CD4-positive, alpha-beta T cell (primary cell): ENCODE measurements at regions of chr1 and their contacts with region 1.

Region 1: GRCh38 chr1:169610108-169610507 is 19.8 kb downstream of the SELP start:
- DNase-seq: no peak
- ATAC-seq: no peak
- H3K4me3 ChIP-seq: no peak overlapping the region
- H3K4me3 Mint-ChIP-seq: no peak overlapping the region
- H3K27ac ChIP-seq: no peak overlapping the region
- H3K27ac Mint-ChIP-seq: no peak overlapping the region
- H3K4me1 ChIP-seq: peaks cover 16% of the 10 kb centered on the region
- H3K4me1 Mint-ChIP-seq: peaks cover 67% of the 10 kb centered on the region
- H3K27me3 ChIP-seq: no peaks in the 10 kb centered on the region
- H3K27me3 Mint-ChIP-seq: no peaks in the 10 kb centered on the region
- CTCF ChIP-seq: no peak

Region 2: GRCh38 chr1:169648709-169649108 is 38.6 kb after region 1 on chr1:
- CTCF ChIA-PET with region 1: no interaction called
- POLR2A ChIA-PET with region 1: no interaction called
- intact Hi-C with region 1: loop called in 1 of 2 experiments (anchors 5 kb)
- DNase-seq: peak in 1 of 14 experiments; percentile 8
- ATAC-seq: no peak
- H3K4me3 ChIP-seq: no peak overlapping the region
- H3K4me3 Mint-ChIP-seq: peak overlapping the region; percentile 32
- H3K27ac ChIP-seq: peak overlapping the region; percentile 8
- H3K27ac Mint-ChIP-seq: peak overlapping the region; percentile 80
- H3K4me1 ChIP-seq: peaks cover 9% of the 10 kb centered on the region
- H3K4me1 Mint-ChIP-seq: peaks cover 55% of the 10 kb centered on the region
- H3K27me3 ChIP-seq: no peaks in the 10 kb centered on the region
- H3K27me3 Mint-ChIP-seq: no peaks in the 10 kb centered on the region
- CTCF ChIP-seq: no peak

Region 3: GRCh38 chr1:169680377-169681019 is 70.4 kb after region 1 on chr1:
- CTCF ChIA-PET with region 1: no interaction called
- POLR2A ChIA-PET with region 1: no interaction called
- intact Hi-C with region 1: loop called in 1 of 2 experiments (anchors 5 kb)
- DNase-seq: peak in 5 of 14 experiments; percentile 15 to 54 (median 34)
- ATAC-seq: peak; percentile 48
- H3K4me3 ChIP-seq: no peak overlapping the region
- H3K4me3 Mint-ChIP-seq: peak overlapping the region; percentile 61
- H3K27ac ChIP-seq: no peak overlapping the region
- H3K27ac Mint-ChIP-seq: peak overlapping the region; percentile 72
- H3K4me1 ChIP-seq: peaks cover 58% of the 10 kb centered on the region
- H3K4me1 Mint-ChIP-seq: peaks cover 61% of the 10 kb centered on the region
- H3K27me3 ChIP-seq: no peaks in the 10 kb centered on the region
- H3K27me3 Mint-ChIP-seq: no peaks in the 10 kb centered on the region
- CTCF ChIP-seq: no peak

Region 4: GRCh38 chr1:171210355-171210754 is 1600.2 kb after region 1 on chr1:
- CTCF ChIA-PET with region 1: no interaction called
- POLR2A ChIA-PET with region 1: no interaction called
- intact Hi-C with region 1: no loop called
- DNase-seq: no peak
- ATAC-seq: no peak
- H3K4me3 ChIP-seq: no peak overlapping the region
- H3K4me3 Mint-ChIP-seq: no peak overlapping the region
- H3K27ac ChIP-seq: no peak overlapping the region
- H3K27ac Mint-ChIP-seq: no peak overlapping the region
- H3K4me1 ChIP-seq: no peaks in the 10 kb centered on the region
- H3K4me1 Mint-ChIP-seq: no peaks in the 10 kb centered on the region
- H3K27me3 ChIP-seq: peaks cover 0 to 6% of the 10 kb centered on the region in 2 experiments
- H3K27me3 Mint-ChIP-seq: peaks cover 22% of the 10 kb centered on the region
- CTCF ChIP-seq: no peak